ENCODE measurements at regions of chr4 and their contacts with region 1.

Region 1: DNA sequence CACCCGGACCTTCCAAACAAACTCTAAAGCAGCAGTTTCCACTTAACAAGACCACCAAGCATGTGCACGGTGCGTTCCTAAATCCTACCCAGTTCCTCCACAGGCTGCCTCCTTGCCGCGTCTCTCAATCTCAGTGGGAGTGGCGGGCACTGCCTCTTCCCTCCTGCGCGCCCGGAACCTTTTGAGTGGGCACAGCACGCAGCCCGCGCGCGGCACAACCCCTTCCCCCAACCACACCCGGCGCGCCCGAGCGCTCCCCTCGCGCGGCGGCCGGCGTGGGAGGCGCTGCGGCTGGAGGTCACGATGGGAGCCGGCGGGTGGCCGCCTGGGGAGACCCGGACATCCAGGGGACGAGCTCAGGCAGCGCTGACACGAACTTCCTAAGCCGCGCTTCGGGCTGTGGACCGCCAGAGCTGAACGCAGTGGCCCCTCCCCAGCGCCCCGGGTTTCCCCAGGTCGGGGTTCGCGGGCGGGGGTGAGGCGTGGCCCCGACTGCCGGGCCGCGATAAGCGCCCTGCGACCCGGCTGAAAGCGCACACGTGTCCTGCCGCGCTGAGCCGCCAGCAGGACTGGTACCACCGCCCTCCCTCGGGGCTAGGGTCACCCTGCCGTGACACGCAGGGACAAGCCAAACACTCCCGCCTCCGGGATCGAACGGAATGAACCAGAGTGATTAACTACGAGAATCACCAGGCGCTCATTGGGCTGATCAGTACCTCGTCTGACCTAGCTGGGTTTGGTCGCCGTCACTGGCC is at the start of gene ABCG2:
- DNase-seq: peak; percentile 77 to 83
- H3K4me3 ChIP-seq: peak within 1 kb of the TSS; percentile 85
- H3K4me3 Mint-ChIP-seq: peak within 1 kb of the TSS; percentile 80
- H3K27ac Mint-ChIP-seq: peak within 1 kb of the TSS; percentile 67
- H3K4me1 ChIP-seq: peaks cover 20% of the 10 kb centered on the region
- H3K4me1 Mint-ChIP-seq: peaks cover 9% of the 10 kb centered on the region
- H3K27me3 ChIP-seq: no peaks in the 10 kb centered on the region
- H3K27me3 Mint-ChIP-seq: no peaks in the 10 kb centered on the region
- CTCF ChIP-seq: no peak
- total RNA-seq, gene ABCG2: 23.7 and 26.0 TPM in 2 replicates

Region 2: GRCh38 chr4:87882321-87882720 is 276.3 kb before region 1 on chr4:
- CTCF ChIA-PET with region 1: no interaction called
- POLR2A ChIA-PET with region 1: no interaction called
- intact Hi-C with region 1: no loop called
- DNase-seq: no peak
- H3K4me3 ChIP-seq: no peak overlapping the region
- H3K4me3 Mint-ChIP-seq: no peak overlapping the region
- H3K27ac Mint-ChIP-seq: no peak overlapping the region
- H3K4me1 ChIP-seq: 0 out of 2 replicates have a peak, but pooled peaks cover 3% of the 10 kb centered on the region
- H3K4me1 Mint-ChIP-seq: peaks cover 7% of the 10 kb centered on the region
- H3K27me3 ChIP-seq: no peaks in the 10 kb centered on the region
- H3K27me3 Mint-ChIP-seq: no peaks in the 10 kb centered on the region
- CTCF ChIP-seq: no peak

Region 3: GRCh38 chr4:88196013-88196365 is 37.3 kb after region 1 on chr4:
- CTCF ChIA-PET with region 1: no interaction called
- POLR2A ChIA-PET with region 1: no interaction called
- intact Hi-C with region 1: loop called (anchors 2 kb)
- DNase-seq: peak; percentile 52 to 75
- H3K4me3 ChIP-seq: no peak overlapping the region
- H3K4me3 Mint-ChIP-seq: peak overlapping the region; percentile 52
- H3K27ac Mint-ChIP-seq: peak overlapping the region; percentile 92
- H3K4me1 ChIP-seq: peaks cover 34% of the 10 kb centered on the region
- H3K4me1 Mint-ChIP-seq: peaks cover 28% of the 10 kb centered on the region
- H3K27me3 ChIP-seq: no peaks in the 10 kb centered on the region
- H3K27me3 Mint-ChIP-seq: no peaks in the 10 kb centered on the region
- CTCF ChIP-seq: no peak

Region 4: DNA sequence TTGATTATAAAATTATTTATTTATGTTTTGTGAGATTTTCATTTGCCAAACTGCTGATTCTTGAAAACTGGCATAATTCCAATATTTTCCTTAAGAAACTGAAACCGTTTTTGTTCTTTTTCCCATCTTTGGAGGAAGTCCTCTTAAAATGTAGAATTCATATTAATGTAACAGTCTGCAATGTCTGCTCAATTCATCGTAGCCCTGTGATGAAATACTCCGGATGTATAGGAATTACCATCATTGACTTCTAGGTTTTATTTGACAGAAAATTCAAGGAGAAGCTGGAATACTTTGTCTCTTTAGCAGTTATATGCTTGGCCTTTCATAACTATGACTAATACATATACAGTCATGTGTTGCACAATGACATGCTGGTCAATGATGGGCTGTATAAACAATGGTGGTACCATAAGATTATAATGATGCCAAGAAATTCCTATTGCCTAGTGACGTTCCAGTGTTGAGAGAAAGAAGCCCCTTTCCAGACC is 1334.0 kb after region 1 on chr4:
- CTCF ChIA-PET with region 1: no interaction called
- POLR2A ChIA-PET with region 1: no interaction called
- intact Hi-C with region 1: no loop called
- DNase-seq: no peak
- H3K4me3 ChIP-seq: no peak overlapping the region
- H3K4me3 Mint-ChIP-seq: no peak overlapping the region
- H3K27ac Mint-ChIP-seq: no peak overlapping the region
- H3K4me1 ChIP-seq: no peaks in the 10 kb centered on the region
- H3K4me1 Mint-ChIP-seq: no peaks in the 10 kb centered on the region
- H3K27me3 ChIP-seq: no peaks in the 10 kb centered on the region
- H3K27me3 Mint-ChIP-seq: no peaks in the 10 kb centered on the region
- CTCF ChIP-seq: no peak

Measured in Caco-2 (cell line).